ENCODE measurements at regions of chr17 and their contacts with region 1.

Region 1: GRCh38 chr17:37489197-37490001 is at the start of gene DUSP14:
- DNase-seq: peak; percentile 57
- ATAC-seq: peak; percentile 78
- H3K4me3 ChIP-seq: peak within 1 kb of the TSS; percentile 72 to 76
- H3K27ac ChIP-seq: peak within 1 kb of the TSS; percentile 91
- H3K4me1 ChIP-seq: peaks cover 43 to 65% of the 10 kb centered on the region in 2 experiments
- H3K27me3 ChIP-seq: no peaks in the 10 kb centered on the region
- CTCF ChIP-seq: no peak
- POLR2A ChIP-seq: peak; percentile 48
- RAD21 ChIP-seq: no peak
- total RNA-seq, gene DUSP14: 27.6 TPM

Region 2: GRCh38 chr17:37406635-37407461 is 82.6 kb before region 1 on chr17 and contains the starts of genes ACACA and TADA2A:
- CTCF ChIA-PET with region 1: no interaction called
- POLR2A ChIA-PET with region 1: no interaction called
- RAD21 ChIA-PET with region 1: no interaction called
- intact Hi-C with region 1: loop called (anchors 2 kb)
- DNase-seq: peak; percentile 60
- ATAC-seq: peak; percentile 95
- H3K4me3 ChIP-seq: peak within 1 kb of the TSS; percentile 83 to 89
- H3K27ac ChIP-seq: peak within 1 kb of the TSS; percentile 97
- H3K4me1 ChIP-seq: peaks cover 10 to 30% of the 10 kb centered on the region in 2 experiments
- H3K27me3 ChIP-seq: no peaks in the 10 kb centered on the region
- CTCF ChIP-seq: 0 out of 6 replicates have a peak, but pooled peaks of 1 of the 3 experiments have one; percentile 3
- POLR2A ChIP-seq: no peak
- RAD21 ChIP-seq: no peak
- total RNA-seq, gene ACACA: 161 TPM
- total RNA-seq, gene TADA2A: 24.6 TPM

Region 3: DNA sequence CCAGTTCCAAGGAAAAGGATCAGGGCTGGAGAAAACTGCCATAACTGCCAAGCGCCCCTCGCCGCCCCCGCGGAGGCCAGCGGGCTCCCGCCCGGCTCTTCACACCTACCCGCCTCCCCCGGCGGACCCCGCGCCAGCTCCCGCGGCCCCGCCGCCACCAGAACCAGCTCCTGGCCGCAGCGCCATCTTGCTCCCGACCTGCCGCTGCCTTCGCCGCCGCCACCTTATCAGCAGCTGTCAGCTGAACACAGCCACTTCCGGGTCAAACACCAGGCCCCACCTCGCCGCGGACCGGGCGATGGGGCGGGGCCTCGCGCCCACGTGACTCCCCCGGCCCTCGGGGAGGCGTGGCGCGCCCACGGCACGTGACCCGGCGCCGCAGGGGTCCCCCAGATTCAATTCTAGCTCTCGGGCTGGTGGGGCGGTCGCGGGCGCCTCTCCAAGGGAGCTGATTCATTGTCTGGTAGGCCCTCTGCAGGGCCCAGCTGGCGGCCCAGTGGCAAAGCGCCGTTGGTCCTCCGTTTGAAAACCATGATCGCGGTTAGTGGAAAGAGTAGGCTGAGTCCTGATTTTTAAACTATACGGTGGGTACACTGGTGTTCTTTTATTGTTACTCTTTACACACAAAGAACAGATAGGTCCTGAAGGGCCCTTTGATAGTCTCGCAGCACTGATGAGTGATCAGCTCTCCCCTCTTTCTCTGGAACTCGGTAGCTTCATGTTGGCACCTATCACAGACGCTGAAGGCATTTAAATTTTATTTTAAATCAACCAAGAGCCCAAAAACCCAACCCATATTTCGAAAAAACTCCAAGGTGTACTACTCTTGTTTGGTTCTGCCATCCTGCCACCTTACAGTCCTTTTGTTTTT is 120.0 kb after region 1 on chr17 and contains the start of gene SYNRG:
- CTCF ChIA-PET with region 1: no interaction called
- POLR2A ChIA-PET with region 1: no interaction called
- RAD21 ChIA-PET with region 1: no interaction called
- intact Hi-C with region 1: loop called (anchors 5 kb)
- DNase-seq: peak; percentile 86
- ATAC-seq: peak; percentile 92
- H3K4me3 ChIP-seq: peak within 1 kb of the TSS; percentile 85 to 91
- H3K27ac ChIP-seq: peak within 1 kb of the TSS; percentile 75
- H3K4me1 ChIP-seq: peaks cover 15 to 26% of the 10 kb centered on the region in 2 experiments
- H3K27me3 ChIP-seq: no peaks in the 10 kb centered on the region
- CTCF ChIP-seq: peak in 2 of 3 experiments; percentile 23 to 29; a peak in 2 of 6 replicates
- POLR2A ChIP-seq: peak; percentile 80
- RAD21 ChIP-seq: peak; percentile 34
- total RNA-seq, gene SYNRG: 23.8 TPM

Region 4: DNA sequence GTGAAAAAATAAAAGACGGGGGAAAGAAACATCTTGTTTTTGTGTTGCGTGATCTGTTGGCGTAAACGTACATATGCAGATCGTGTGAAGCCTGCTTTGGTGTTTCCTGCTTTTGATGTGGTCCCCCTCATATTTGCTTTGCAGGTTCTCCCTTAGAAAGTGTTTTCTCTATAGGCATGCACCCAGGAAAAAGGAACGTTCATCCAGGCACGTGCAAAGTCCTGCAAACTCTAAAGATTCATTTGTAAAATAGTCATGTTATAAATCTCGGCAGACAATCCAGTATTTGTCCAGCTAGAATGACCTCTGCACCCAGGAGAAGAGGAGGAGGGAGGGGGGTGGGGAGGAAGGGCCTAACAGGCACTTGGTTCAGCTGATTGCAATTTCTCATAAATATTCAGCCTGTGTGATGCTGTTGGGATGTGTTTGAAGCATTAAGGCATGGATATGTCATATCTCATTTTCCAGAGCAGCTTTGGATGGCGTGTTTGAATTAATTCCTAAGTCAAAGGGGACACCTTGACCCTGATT is 194.1 kb after region 1 on chr17:
- CTCF ChIA-PET with region 1: no interaction called
- POLR2A ChIA-PET with region 1: no interaction called
- RAD21 ChIA-PET with region 1: no interaction called
- intact Hi-C with region 1: no loop called
- DNase-seq: no peak
- ATAC-seq: no peak
- H3K4me3 ChIP-seq: no peak overlapping the region
- H3K27ac ChIP-seq: no peak overlapping the region
- H3K4me1 ChIP-seq: no peaks in the 10 kb centered on the region
- H3K27me3 ChIP-seq: no peaks in the 10 kb centered on the region
- CTCF ChIP-seq: no peak
- POLR2A ChIP-seq: no peak
- RAD21 ChIP-seq: no peak

Measured in HCT116 (cell line).